Calu3 (cell line): ENCODE measurements at regions of chr14 and their contacts with region 1.

Region 1: GRCh38 chr14:35229495-35230089 is 62.6 kb upstream of the PSMA6 start:
- DNase-seq: no peak
- H3K4me3 Mint-ChIP-seq: no peak overlapping the region
- H3K27ac Mint-ChIP-seq: no peak overlapping the region
- H3K4me1 Mint-ChIP-seq: no peaks in the 10 kb centered on the region
- H3K27me3 Mint-ChIP-seq: no peaks in the 10 kb centered on the region
- CTCF ChIP-seq: no peak

Region 2: DNA sequence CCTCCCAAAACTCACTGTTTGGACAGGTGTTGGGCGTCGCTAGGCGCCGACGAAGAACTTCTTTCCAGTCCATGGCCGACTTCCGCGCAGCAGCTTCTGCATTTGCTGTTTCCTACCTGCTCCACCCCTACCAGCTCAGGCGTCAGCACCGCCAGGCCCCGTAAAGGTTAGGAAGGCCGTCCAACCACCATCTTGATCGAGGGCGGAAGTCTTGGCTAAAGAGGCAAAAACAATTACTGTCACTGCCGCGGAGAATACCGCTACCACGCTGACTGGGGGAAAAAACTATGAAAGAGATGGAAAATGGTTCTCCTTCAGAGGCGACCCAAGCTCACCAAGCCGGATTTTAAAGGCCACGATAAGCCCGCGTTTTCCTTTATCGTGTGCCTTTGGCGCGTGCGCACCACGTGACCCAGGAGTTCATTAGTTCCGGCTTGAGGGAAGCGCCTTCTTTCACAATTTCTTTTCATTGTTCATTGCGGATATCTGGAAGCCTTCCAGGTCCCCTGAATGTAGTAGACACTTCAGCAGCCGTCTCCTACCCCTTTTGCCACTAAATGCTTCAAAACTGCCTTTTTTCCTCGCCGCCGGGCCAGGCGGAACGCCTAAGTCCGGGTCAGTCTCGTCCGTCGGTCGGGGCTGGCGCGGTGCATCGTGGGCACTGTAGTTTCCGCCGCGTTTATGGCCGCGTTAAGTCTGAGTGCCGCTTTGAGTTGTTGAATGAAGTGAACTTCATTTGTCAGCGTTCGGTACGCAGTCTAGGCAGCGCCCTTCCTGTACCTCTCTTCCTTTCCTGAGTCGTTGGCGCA is 107.5 kb before region 1 on chr14 and contains the starts of genes PPP2R3C and PRORP:
- CTCF ChIA-PET with region 1: no interaction called
- intact Hi-C with region 1: no loop called
- DNase-seq: peak; percentile 91
- H3K4me3 Mint-ChIP-seq: peak within 1 kb of the TSS; percentile 91
- H3K27ac Mint-ChIP-seq: peak within 1 kb of the TSS; percentile 100
- H3K4me1 Mint-ChIP-seq: peaks cover 22% of the 10 kb centered on the region
- H3K27me3 Mint-ChIP-seq: no peaks in the 10 kb centered on the region
- CTCF ChIP-seq: no peak
- total RNA-seq, gene PPP2R3C: 11.3 and 15.8 TPM in 2 replicates
- total RNA-seq, gene PRORP: 22.5 and 25.2 TPM in 2 replicates

Region 3: DNA sequence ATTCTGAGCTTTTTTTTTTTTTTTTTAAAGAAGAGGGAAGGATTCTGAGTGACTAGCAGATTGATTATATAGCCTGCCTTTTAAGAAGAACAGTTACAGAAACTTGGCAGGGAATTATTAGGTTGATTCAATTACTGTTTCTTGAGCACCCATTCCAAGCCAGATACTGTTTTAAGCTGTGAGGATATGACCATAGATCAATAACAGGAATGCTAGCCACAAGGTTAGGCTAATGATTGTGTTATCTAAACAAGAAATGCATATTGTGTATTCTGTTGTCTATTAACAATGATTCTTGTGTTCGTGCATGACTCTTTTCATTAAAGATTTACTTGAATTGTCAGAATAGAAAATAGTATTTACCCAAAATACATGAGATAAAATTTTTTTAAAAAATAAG is 40.2 kb before region 1 on chr14:
- CTCF ChIA-PET with region 1: no interaction called
- intact Hi-C with region 1: no loop called
- DNase-seq: no peak
- H3K4me3 Mint-ChIP-seq: no peak overlapping the region
- H3K27ac Mint-ChIP-seq: no peak overlapping the region
- H3K4me1 Mint-ChIP-seq: peaks cover 34% of the 10 kb centered on the region
- H3K27me3 Mint-ChIP-seq: no peaks in the 10 kb centered on the region
- CTCF ChIP-seq: no peak

Region 4: GRCh38 chr14:35252451-35252868 is 22.9 kb after region 1 on chr14:
- CTCF ChIA-PET with region 1: interaction called, 12 read pairs
- intact Hi-C with region 1: no loop called
- DNase-seq: no peak
- H3K4me3 Mint-ChIP-seq: no peak overlapping the region
- H3K27ac Mint-ChIP-seq: no peak overlapping the region
- H3K4me1 Mint-ChIP-seq: peaks cover 6% of the 10 kb centered on the region
- H3K27me3 Mint-ChIP-seq: no peaks in the 10 kb centered on the region
- CTCF ChIP-seq: no peak

Region 5: GRCh38 chr14:35403603-35404448 is 174.2 kb after region 1 on chr14:
- CTCF ChIA-PET with region 1: interaction called, 9 read pairs
- intact Hi-C with region 1: loop called (anchors 1 kb)
- DNase-seq: peak; percentile 97
- H3K4me3 Mint-ChIP-seq: peak overlapping the region; percentile 93
- H3K27ac Mint-ChIP-seq: peak overlapping the region; percentile 96
- H3K4me1 Mint-ChIP-seq: peaks cover 32% of the 10 kb centered on the region
- H3K27me3 Mint-ChIP-seq: no peaks in the 10 kb centered on the region
- CTCF ChIP-seq: no peak